CD4-positive, alpha-beta memory T cell (primary cell): ENCODE measurements at regions of chr5 and their contacts with region 1.

Region 1: DNA sequence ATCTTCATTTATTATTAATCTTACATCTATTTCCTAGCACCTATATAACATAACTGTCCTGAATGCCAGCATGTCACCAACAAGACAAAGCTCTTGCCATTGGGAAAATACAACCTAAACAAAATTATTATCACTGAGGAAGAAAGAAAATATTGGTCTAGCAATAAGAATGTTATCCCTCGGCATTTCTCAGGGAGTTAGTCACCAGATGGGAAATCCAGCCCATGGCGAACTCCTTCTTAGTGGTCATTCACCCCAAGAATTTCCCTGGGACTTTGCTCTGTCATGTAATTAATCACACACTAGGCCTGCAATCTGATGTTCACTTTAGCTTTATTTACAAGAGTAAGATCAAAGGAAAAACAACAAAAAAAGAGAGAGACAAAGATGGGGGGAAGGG is 56.1 kb upstream of the TAS2R1 start:
- DNase-seq: no peak
- H3K4me3 ChIP-seq: no peak overlapping the region
- H3K4me3 Mint-ChIP-seq: no peak overlapping the region
- H3K27ac ChIP-seq: no peak overlapping the region
- H3K27ac Mint-ChIP-seq: no peak overlapping the region
- H3K4me1 ChIP-seq: no peaks in the 10 kb centered on the region
- H3K4me1 Mint-ChIP-seq: no peaks in the 10 kb centered on the region
- H3K27me3 ChIP-seq: no peaks in the 10 kb centered on the region
- H3K27me3 Mint-ChIP-seq: no peaks in the 10 kb centered on the region

Region 2: GRCh38 chr5:8829323-8830029 is 856.7 kb before region 1 on chr5:
- CTCF ChIA-PET with region 1: no interaction called
- POLR2A ChIA-PET with region 1: no interaction called
- intact Hi-C with region 1: loop called (anchors 5 kb)
- DNase-seq: no peak
- H3K4me3 ChIP-seq: no peak overlapping the region
- H3K4me3 Mint-ChIP-seq: no peak overlapping the region
- H3K27ac ChIP-seq: no peak overlapping the region
- H3K27ac Mint-ChIP-seq: no peak overlapping the region
- H3K4me1 ChIP-seq: no peaks in the 10 kb centered on the region
- H3K4me1 Mint-ChIP-seq: no peaks in the 10 kb centered on the region
- H3K27me3 ChIP-seq: no peaks in the 10 kb centered on the region
- H3K27me3 Mint-ChIP-seq: no peaks in the 10 kb centered on the region

Region 3: DNA sequence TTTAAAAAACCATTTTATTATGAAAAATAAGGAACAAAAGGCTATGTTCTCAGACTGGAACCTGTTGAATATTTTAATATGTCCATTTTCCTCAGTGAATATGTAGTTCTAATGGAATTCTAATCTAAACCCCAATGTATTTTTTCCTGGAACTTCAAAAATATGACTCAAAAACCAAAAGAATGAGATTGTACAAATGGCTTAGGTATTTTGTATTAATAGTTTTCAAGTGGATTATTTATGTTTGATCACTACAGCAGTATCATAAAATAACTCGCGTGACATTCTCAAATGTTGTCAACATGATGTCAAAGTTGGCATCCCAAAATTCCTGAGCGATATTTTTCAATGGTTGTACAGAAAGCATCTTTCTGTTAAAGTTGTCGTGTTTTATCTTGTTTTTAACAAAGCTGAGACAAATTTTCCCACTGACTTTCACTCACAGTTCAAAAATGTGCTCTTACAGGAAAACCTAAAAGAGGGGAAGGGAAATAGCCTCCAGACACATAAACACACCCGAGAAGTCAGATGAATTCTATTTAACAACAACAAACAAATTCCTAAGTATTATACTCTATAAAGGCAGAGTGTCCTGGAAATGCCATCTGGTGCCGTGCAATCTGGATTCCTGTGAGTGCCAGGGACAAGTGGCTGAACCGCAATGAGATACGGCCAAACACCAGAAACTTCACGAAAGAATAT is 12.1 kb after region 1 on chr5:
- CTCF ChIA-PET with region 1: no interaction called
- POLR2A ChIA-PET with region 1: no interaction called
- intact Hi-C with region 1: no loop called
- DNase-seq: no peak
- H3K4me3 ChIP-seq: no peak overlapping the region
- H3K4me3 Mint-ChIP-seq: no peak overlapping the region
- H3K27ac ChIP-seq: no peak overlapping the region
- H3K27ac Mint-ChIP-seq: peak overlapping the region in 1 of 7 donors; percentile 15
- H3K4me1 ChIP-seq: no peaks in the 10 kb centered on the region
- H3K4me1 Mint-ChIP-seq: no peaks in the 10 kb centered on the region
- H3K27me3 ChIP-seq: no peaks in the 10 kb centered on the region
- H3K27me3 Mint-ChIP-seq: no peaks in the 10 kb centered on the region